ENCODE measurements at regions of chr11 and their contacts with region 1.

Region 1: GRCh38 chr11:32838505-32838904 is 8.8 kb downstream of the PRRG4 start:
- DNase-seq: no peak
- ATAC-seq: peak; percentile 78
- H3K4me3 ChIP-seq: no peak overlapping the region
- H3K27ac ChIP-seq: peak overlapping the region; percentile 42
- H3K4me1 ChIP-seq: peaks cover 29% of the 10 kb centered on the region
- H3K27me3 ChIP-seq: no peaks in the 10 kb centered on the region
- CTCF ChIP-seq: no peak

Region 2: GRCh38 chr11:32511926-32512325 is 326.6 kb before region 1 on chr11:
- CTCF ChIA-PET with region 1: no interaction called
- POLR2A ChIA-PET with region 1: no interaction called
- intact Hi-C with region 1: no loop called
- DNase-seq: peak; percentile 78
- ATAC-seq: peak; percentile 96
- H3K4me3 ChIP-seq: no peak overlapping the region
- H3K27ac ChIP-seq: peak overlapping the region; percentile 56
- H3K4me1 ChIP-seq: peaks cover 10% of the 10 kb centered on the region
- H3K27me3 ChIP-seq: no peaks in the 10 kb centered on the region
- CTCF ChIP-seq: no peak

Region 3: GRCh38 chr11:32881286-32881685 is 42.8 kb after region 1 on chr11:
- CTCF ChIA-PET with region 1: no interaction called
- POLR2A ChIA-PET with region 1: interaction called, 10 read pairs
- intact Hi-C with region 1: no loop called
- DNase-seq: peak; percentile 56
- ATAC-seq: peak; percentile 20; the same call in 1 of the 2 replicates
- H3K4me3 ChIP-seq: no peak overlapping the region
- H3K27ac ChIP-seq: no peak overlapping the region; the same call in 1 of the 2 replicates
- H3K4me1 ChIP-seq: no peaks in the 10 kb centered on the region
- H3K27me3 ChIP-seq: no peaks in the 10 kb centered on the region
- CTCF ChIP-seq: no peak

Region 4: GRCh38 chr11:33005175-33005574 is 166.7 kb after region 1 on chr11:
- CTCF ChIA-PET with region 1: no interaction called
- POLR2A ChIA-PET with region 1: no interaction called
- intact Hi-C with region 1: no loop called
- DNase-seq: no peak
- ATAC-seq: no peak
- H3K4me3 ChIP-seq: no peak overlapping the region
- H3K27ac ChIP-seq: no peak overlapping the region
- H3K4me1 ChIP-seq: peaks cover 8% of the 10 kb centered on the region
- H3K27me3 ChIP-seq: no peaks in the 10 kb centered on the region
- CTCF ChIP-seq: no peak